BJ (cell line): ENCODE measurements at regions of chr11 and their contacts with region 1.

Region 1: DNA sequence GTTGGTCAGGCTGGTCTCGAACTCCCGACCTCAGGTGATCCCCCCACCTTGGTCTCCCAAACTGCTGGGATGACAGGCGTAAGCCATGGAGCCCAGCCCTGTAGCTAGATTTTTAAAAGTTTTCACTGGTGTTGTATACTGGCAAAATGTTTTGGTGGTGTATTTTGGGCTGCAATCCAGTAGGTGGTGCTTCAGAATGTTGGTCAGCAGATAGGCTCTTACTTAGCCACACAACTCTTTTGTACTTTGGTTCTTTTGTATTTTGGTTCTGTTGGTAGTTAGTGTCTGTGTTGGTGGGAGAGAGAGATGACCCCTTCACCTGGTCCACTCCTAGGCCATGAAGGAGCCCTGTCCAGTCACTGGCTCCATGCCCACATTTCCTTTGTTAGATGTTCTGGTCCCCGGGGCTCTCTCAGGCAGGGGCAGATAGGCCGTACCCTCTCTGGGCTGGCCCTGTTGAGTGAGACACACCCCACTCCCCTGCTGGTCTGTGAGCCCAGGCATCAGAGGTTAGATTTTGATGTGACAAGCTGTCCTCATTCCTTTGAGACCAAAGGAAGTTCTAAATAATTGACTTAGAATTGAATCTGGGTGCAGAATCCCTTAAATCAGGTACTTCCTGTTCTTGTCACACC is 123.8 kb downstream of the DDX10 start:
- DNase-seq: no peak
- H3K4me3 ChIP-seq: no peak overlapping the region
- H3K27me3 ChIP-seq: no peaks in the 10 kb centered on the region
- CTCF ChIP-seq: peak; percentile 54

Region 2: GRCh38 chr11:108025387-108026080 is 763.1 kb before region 1 on chr11:
- CTCF ChIA-PET with region 1: no interaction called
- POLR2A ChIA-PET with region 1: no interaction called
- DNase-seq: no peak
- H3K4me3 ChIP-seq: no peak overlapping the region
- H3K27me3 ChIP-seq: no peaks in the 10 kb centered on the region
- CTCF ChIP-seq: 0 out of 2 replicates have a peak, but pooled peaks have one; percentile 11

Region 3: DNA sequence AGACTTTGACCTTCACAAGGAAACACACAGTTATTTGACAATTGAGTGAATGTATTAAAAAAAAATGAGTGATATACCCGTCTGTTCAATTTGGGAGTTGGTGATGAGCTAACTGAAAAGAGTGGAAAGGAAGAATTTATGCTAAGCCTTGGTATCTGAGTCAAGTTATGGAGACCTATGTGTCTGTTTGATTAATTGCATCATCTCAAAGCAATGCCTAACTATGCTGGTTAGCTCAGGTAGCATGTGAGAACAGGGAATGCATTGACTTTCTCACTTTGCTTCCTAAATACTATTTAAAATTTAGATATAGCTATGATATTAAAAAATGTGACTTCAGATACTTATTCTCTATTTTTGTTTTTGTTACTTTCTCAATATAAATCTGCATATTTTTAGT is 13.4 kb before region 1 on chr11:
- CTCF ChIA-PET with region 1: interaction called, 12 read pairs
- POLR2A ChIA-PET with region 1: no interaction called
- DNase-seq: no peak
- H3K4me3 ChIP-seq: no peak overlapping the region
- H3K27me3 ChIP-seq: no peaks in the 10 kb centered on the region
- CTCF ChIP-seq: no peak